Activated CD4-positive, alpha-beta T cell treated with anti-CD3 and anti-CD28 coated beads, Interleukin-2, amount 10 ng/mL, durations not matched to agents 24 days and 14 days (primary cell): ENCODE measurements at regions of chr7 and their contacts with region 1.

Region 1: GRCh38 chr7:24979863-24980533 is at the start of gene OSBPL3:
- DNase-seq: peak; percentile 98
- H3K4me3 Mint-ChIP-seq: peak within 1 kb of the TSS; percentile 96
- H3K27ac Mint-ChIP-seq: peak within 1 kb of the TSS; percentile 96
- H3K4me1 Mint-ChIP-seq: peaks cover 53% of the 10 kb centered on the region
- H3K27me3 Mint-ChIP-seq: no peaks in the 10 kb centered on the region
- total RNA-seq, gene OSBPL3: 93.7 and 93.8 TPM in 2 replicates

Region 2: GRCh38 chr7:24757353-24758275 is 222.4 kb before region 1 on chr7 and contains the start of gene GSDME:
- intact Hi-C with region 1: loop called (anchors 5 kb)
- DNase-seq: peak; percentile 86
- H3K4me3 Mint-ChIP-seq: peak within 1 kb of the TSS; percentile 94
- H3K27ac Mint-ChIP-seq: peak within 1 kb of the TSS; percentile 84
- H3K4me1 Mint-ChIP-seq: peaks cover 32% of the 10 kb centered on the region
- H3K27me3 Mint-ChIP-seq: peaks cover 36% of the 10 kb centered on the region
- total RNA-seq, gene GSDME: 9.6 and 10.4 TPM in 2 replicates

Region 3: DNA sequence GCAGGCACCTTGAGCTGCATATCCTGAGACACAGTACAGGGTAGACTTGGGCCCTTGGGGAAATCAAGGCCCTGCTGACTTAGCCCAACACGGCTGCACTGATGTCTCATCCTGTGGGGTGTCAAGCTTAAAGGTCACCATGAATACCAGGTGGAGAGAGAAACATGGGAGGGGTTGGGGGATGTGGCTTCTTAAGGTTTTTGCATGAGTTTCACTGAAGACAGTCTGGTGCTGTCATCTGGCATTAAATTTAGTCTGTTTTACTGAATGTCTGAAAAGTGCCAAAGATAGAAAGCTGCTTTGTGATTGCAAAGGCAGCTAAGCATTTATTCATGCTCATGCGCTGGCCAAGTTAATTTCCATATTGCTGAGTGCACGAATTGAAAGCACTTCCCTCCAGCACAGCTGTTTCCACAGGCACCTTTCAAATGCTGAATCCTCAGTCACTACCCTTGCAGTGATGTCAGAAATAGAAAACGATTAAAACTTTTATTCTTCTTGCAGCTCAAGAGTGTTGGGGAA is 102.1 kb before region 1 on chr7:
- intact Hi-C with region 1: loop called (anchors 1 kb)
- DNase-seq: peak; percentile 76
- H3K4me3 Mint-ChIP-seq: peak overlapping the region; percentile 73
- H3K27ac Mint-ChIP-seq: peak overlapping the region; percentile 84
- H3K4me1 Mint-ChIP-seq: peaks cover 47% of the 10 kb centered on the region
- H3K27me3 Mint-ChIP-seq: no peaks in the 10 kb centered on the region

Region 4: GRCh38 chr7:24921362-24921679 is 58.7 kb before region 1 on chr7:
- intact Hi-C with region 1: loop called (anchors 2 kb)
- DNase-seq: peak; percentile 79
- H3K4me3 Mint-ChIP-seq: peak overlapping the region; percentile 64
- H3K27ac Mint-ChIP-seq: peak overlapping the region; percentile 92
- H3K4me1 Mint-ChIP-seq: peaks cover 88% of the 10 kb centered on the region
- H3K27me3 Mint-ChIP-seq: no peaks in the 10 kb centered on the region

Region 5: GRCh38 chr7:25028370-25029021 is 48.5 kb after region 1 on chr7:
- intact Hi-C with region 1: loop called (anchors 1 kb)
- DNase-seq: peak; percentile 82
- H3K4me3 Mint-ChIP-seq: peak overlapping the region; percentile 48
- H3K27ac Mint-ChIP-seq: peak overlapping the region; percentile 87
- H3K4me1 Mint-ChIP-seq: peaks cover 45% of the 10 kb centered on the region
- H3K27me3 Mint-ChIP-seq: peaks cover 10% of the 10 kb centered on the region

Region 6: GRCh38 chr7:25093268-25093826 is 113.3 kb after region 1 on chr7:
- intact Hi-C with region 1: loop called (anchors 2 kb)
- DNase-seq: peak; percentile 94
- H3K4me3 Mint-ChIP-seq: no peak overlapping the region
- H3K27ac Mint-ChIP-seq: no peak overlapping the region
- H3K4me1 Mint-ChIP-seq: peaks cover 13% of the 10 kb centered on the region
- H3K27me3 Mint-ChIP-seq: peaks cover 7% of the 10 kb centered on the region